ENCODE measurements at regions of chr1 and their contacts with region 1.

Region 1: GRCh38 chr1:102120910-102121309 is 124.2 kb upstream of the OLFM3 start:
- DNase-seq: no peak
- H3K4me3 ChIP-seq: no peak overlapping the region
- H3K27ac ChIP-seq: no peak overlapping the region
- H3K4me1 ChIP-seq: no peaks in the 10 kb centered on the region
- CTCF ChIP-seq: no peak

Region 2: GRCh38 chr1:102970498-102971078 is 849.7 kb after region 1 on chr1:
- CTCF ChIA-PET with region 1: no interaction called
- POLR2A ChIA-PET with region 1: no interaction called
- intact Hi-C with region 1: loop called (anchors 5 kb)
- DNase-seq: peak; percentile 71
- H3K4me3 ChIP-seq: no peak overlapping the region
- H3K27ac ChIP-seq: no peak overlapping the region
- H3K4me1 ChIP-seq: no peaks in the 10 kb centered on the region
- CTCF ChIP-seq: peak; percentile 85

Measured in OCI-LY7 (cell line).